Endothelial cell of umbilical vein (primary cell): ENCODE measurements at regions of chrX and their contacts with region 1.

Region 1: DNA sequence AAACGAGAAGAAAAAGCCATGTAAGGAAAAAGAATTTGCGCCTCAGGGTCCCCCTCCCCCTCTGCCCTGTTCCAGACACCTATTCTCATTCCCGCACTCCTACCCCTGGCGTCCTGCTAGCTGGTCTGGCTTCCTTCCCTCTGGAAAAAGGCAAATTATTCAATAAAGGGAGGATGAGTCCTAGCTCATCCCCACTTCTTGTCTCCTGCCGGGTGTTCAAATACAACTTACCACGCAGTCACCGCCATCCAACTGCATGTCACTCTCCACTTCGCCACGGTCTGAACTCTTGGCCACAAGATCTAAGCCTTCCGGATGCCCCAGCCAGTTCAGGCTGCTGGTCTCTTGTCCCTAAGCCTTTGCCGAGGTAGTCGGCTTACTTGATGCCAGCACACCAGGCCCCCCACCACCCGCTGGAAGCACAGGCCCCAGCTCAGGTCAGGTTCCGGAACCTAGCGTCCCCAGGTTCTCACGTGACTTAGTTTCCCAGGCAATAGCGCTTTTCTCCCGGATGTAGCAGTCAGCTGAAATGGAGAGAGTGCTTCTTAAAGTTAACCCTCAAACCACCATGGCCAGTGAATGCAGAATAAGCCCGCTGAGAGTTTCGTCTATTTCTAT is 209.6 kb upstream of the SPIN4 start:
- DNase-seq: peak; percentile 81
- H3K4me3 ChIP-seq: peak overlapping the region; percentile 64 to 93 (median 82)
- H3K27ac ChIP-seq: peak overlapping the region; percentile 21
- H3K4me1 ChIP-seq: no peaks in the 10 kb centered on the region
- H3K27me3 ChIP-seq: no peaks in the 10 kb centered on the region
- CTCF ChIP-seq: no peak
- POLR2A ChIP-seq: no peak

Region 2: DNA sequence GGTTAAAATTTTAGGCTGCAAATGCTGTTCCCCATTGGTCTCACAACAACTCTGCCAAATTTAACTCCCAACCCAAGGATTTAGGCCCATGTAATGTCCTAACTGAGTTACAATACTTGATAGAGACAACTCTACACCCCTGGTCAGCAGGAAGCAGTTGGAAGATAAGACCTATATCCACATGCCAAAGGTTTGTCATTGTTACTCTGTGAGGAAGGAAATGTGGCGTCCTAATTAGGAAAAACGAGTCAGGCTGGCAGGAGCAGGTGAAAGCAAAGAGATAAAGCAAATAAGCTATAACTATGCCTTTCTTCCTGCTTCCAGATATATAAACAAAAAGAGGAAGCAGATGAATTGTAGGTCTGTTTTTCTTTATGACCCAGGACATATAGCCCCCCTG is 278.6 kb before region 1 on chrX:
- CTCF ChIA-PET with region 1: no interaction called
- POLR2A ChIA-PET with region 1: no interaction called
- dilution Hi-C with region 1: no loop called
- intact Hi-C with region 1: no loop called
- DNase-seq: peak; percentile 21
- H3K4me3 ChIP-seq: no peak overlapping the region
- H3K27ac ChIP-seq: no peak overlapping the region
- H3K4me1 ChIP-seq: no peaks in the 10 kb centered on the region
- H3K27me3 ChIP-seq: no peaks in the 10 kb centered on the region
- CTCF ChIP-seq: no peak
- POLR2A ChIP-seq: no peak

Region 3: GRCh38 chrX:63350941-63351616 is 209.6 kb before region 1 on chrX and contains the start of gene SPIN4:
- CTCF ChIA-PET with region 1: no interaction called
- POLR2A ChIA-PET with region 1: no interaction called
- dilution Hi-C with region 1: no loop called
- intact Hi-C with region 1: loop called (anchors 2 kb)
- DNase-seq: peak; percentile 93
- H3K4me3 ChIP-seq: peak within 1 kb of the TSS; percentile 10 to 63 (median 41)
- H3K27ac ChIP-seq: peak within 1 kb of the TSS; percentile 23
- H3K4me1 ChIP-seq: peaks cover 9% of the 10 kb centered on the region
- H3K27me3 ChIP-seq: no peaks in the 10 kb centered on the region
- CTCF ChIP-seq: no peak
- POLR2A ChIP-seq: peak; percentile 50
- total RNA-seq, gene SPIN4: 5.8 and 7.5 TPM in 2 replicates

Region 4: DNA sequence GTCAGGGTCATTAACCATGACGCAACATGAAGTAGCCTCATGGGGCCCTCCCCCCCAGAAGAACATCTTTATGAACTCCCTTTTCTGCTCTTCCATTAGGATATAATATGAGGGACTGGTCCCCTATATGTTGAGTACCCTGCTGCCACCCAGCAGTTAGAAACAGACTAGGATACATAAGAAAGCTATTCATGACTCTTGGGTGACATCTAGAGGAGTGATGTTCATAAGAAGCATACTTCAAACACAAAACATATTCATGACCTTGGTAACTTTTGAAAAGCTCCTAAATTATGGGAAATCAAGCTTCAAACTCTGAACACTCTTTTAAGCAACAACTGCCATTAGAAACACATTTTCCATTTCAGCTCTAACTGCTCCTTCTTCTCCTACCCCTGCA is 54.4 kb before region 1 on chrX:
- CTCF ChIA-PET with region 1: no interaction called
- POLR2A ChIA-PET with region 1: no interaction called
- dilution Hi-C with region 1: no loop called
- intact Hi-C with region 1: no loop called
- DNase-seq: peak; percentile 50
- H3K4me3 ChIP-seq: no peak overlapping the region
- H3K27ac ChIP-seq: no peak overlapping the region
- H3K4me1 ChIP-seq: no peaks in the 10 kb centered on the region
- H3K27me3 ChIP-seq: no peaks in the 10 kb centered on the region
- CTCF ChIP-seq: peak in 1 of 2 donors; percentile 13
- POLR2A ChIP-seq: no peak

Region 5: GRCh38 chrX:63761639-63762038 is 200.9 kb after region 1 on chrX:
- CTCF ChIA-PET with region 1: no interaction called
- POLR2A ChIA-PET with region 1: no interaction called
- dilution Hi-C with region 1: no loop called
- intact Hi-C with region 1: no loop called
- DNase-seq: peak; percentile 3
- H3K4me3 ChIP-seq: no peak overlapping the region
- H3K27ac ChIP-seq: no peak overlapping the region
- H3K4me1 ChIP-seq: peaks cover 4% of the 10 kb centered on the region
- H3K27me3 ChIP-seq: no peaks in the 10 kb centered on the region
- CTCF ChIP-seq: no peak
- POLR2A ChIP-seq: no peak

Region 6: DNA sequence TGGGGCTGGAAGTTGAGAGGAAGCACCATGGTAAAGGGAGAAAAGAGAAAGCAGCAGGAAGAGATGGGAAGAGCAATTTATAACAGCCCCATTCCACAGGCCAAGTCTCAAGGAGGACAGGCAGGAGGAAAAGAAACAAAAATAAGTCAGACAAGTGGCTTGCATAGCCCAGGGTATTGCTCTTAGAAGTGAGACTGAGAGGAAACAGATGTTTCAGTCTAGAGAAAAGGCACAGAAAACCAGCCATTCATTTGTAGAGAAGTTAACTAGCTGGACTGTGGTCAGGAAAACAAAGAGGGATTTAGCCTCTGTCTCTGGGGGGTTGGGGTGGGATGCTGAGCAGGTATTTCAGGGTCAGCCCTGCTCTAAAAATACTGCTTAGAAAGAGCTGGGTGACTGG is 399.3 kb after region 1 on chrX:
- CTCF ChIA-PET with region 1: no interaction called
- POLR2A ChIA-PET with region 1: no interaction called
- dilution Hi-C with region 1: no loop called
- intact Hi-C with region 1: no loop called
- DNase-seq: no peak
- H3K4me3 ChIP-seq: no peak overlapping the region
- H3K27ac ChIP-seq: no peak overlapping the region
- H3K4me1 ChIP-seq: no peaks in the 10 kb centered on the region
- H3K27me3 ChIP-seq: no peaks in the 10 kb centered on the region
- CTCF ChIP-seq: no peak
- POLR2A ChIP-seq: no peak